Caco-2 (cell line): ENCODE measurements at regions of chr3 and their contacts with region 1.

Region 1: DNA sequence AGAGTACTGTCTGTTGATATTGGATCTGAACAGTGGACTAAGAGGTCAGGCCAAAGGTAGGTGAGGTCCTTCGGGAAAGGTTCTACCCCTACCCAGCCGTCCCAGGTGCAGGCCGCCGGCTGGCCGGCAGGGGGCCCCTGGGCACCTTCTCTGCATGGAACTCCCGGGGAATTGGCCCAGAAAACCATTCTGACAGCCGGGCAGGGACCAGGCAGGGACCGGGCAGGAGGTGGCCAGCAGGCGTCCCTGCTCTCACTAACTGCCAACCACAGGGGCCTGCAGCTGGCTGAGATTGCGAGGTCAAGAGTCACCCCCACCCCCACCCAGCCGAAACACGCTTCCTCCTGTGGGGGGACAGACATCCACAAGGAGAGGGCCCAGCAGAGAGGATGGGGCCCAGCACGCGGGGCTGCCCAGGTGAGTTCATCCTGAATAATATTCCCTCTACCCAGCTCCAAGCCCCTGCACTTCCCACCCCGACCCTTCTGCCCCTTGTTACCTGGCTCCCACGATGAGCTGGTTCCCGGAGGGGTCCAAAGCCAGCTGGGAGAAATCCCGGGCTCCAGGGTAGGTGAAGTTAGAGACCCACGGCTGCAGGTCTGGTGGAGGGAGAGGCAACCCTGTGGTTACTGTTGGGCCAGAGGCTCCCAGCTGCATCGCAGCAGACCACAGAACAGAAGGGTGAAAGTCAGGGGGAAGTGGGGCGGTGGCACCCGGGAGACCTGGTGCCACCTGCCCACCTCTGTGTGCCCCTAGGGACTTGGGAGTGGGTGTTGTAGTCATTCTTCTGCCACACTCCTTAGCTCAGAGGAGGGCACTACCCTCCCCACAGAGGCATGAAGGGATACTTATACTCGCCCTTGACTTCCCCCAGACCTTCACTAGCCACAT is 84.4 kb downstream of the SEMA5B start:
- DNase-seq: peak; percentile 68 to 85
- H3K4me3 ChIP-seq: no peak overlapping the region
- H3K4me3 Mint-ChIP-seq: no peak overlapping the region
- H3K27ac Mint-ChIP-seq: peak overlapping the region; percentile 16
- H3K4me1 ChIP-seq: no peaks in the 10 kb centered on the region; the same call in 1 of the 2 replicates
- H3K4me1 Mint-ChIP-seq: peaks cover 7% of the 10 kb centered on the region
- H3K27me3 ChIP-seq: no peaks in the 10 kb centered on the region
- H3K27me3 Mint-ChIP-seq: no peaks in the 10 kb centered on the region
- CTCF ChIP-seq: peak; percentile 77 to 92

Region 2: GRCh38 chr3:122754929-122755328 is 188.3 kb before region 1 on chr3:
- CTCF ChIA-PET with region 1: interaction called, 3 read pairs
- POLR2A ChIA-PET with region 1: no interaction called
- intact Hi-C with region 1: loop called (anchors 2 kb)
- DNase-seq: peak; percentile 71 to 76
- H3K4me3 ChIP-seq: no peak overlapping the region
- H3K4me3 Mint-ChIP-seq: peak overlapping the region; percentile 43
- H3K27ac Mint-ChIP-seq: peak overlapping the region; percentile 93
- H3K4me1 ChIP-seq: peaks cover 43% of the 10 kb centered on the region
- H3K4me1 Mint-ChIP-seq: peaks cover 35% of the 10 kb centered on the region
- H3K27me3 ChIP-seq: no peaks in the 10 kb centered on the region
- H3K27me3 Mint-ChIP-seq: no peaks in the 10 kb centered on the region
- CTCF ChIP-seq: peak; percentile 75 to 82

Region 3: GRCh38 chr3:122982216-122983185 is 39.3 kb after region 1 on chr3:
- CTCF ChIA-PET with region 1: no interaction called
- POLR2A ChIA-PET with region 1: no interaction called
- intact Hi-C with region 1: loop called (anchors 2 kb)
- DNase-seq: peak; percentile 41 to 50
- H3K4me3 ChIP-seq: no peak overlapping the region
- H3K4me3 Mint-ChIP-seq: no peak overlapping the region
- H3K27ac Mint-ChIP-seq: no peak overlapping the region
- H3K4me1 ChIP-seq: peaks cover 4% of the 10 kb centered on the region; the same call in 1 of the 2 replicates
- H3K4me1 Mint-ChIP-seq: no peaks in the 10 kb centered on the region
- H3K27me3 ChIP-seq: no peaks in the 10 kb centered on the region
- H3K27me3 Mint-ChIP-seq: no peaks in the 10 kb centered on the region
- CTCF ChIP-seq: peak; percentile 30 to 34

Region 4: DNA sequence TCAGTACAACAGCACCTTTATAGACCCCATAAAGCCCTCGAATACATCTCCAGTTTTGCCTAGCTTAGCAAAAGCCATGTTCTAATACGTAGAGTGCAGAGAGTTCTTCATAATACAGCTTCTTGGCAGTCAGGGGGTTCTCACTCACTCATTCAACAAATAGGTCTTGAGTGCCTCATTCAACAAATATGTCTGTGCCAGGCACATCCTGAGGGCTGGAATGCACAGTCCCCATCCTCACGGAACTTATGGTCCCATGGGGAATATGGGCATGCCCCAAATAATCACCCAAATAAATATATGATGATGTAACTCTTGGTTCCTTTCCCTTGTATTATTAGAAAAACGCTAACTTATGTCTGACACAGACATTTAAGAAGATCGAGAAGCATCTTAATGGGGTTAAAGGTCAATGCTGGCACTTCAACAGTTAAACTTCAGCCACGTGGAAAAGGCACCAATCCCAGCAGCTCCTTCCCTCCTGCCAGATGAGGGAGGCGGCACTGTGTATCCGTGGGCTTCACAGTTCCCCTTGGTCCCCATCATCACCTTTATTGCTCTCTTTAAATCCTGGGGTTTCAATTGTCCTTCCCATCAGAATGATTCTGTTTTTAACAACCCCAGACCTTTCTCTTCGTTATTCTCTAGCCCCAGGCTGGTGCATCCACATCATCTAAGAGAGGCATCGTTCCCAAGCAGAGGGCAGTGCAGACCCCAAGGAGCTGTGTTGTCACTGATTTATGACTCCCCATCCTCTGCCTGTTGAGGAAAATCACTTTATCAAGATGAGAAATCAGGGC is 103.3 kb after region 1 on chr3:
- CTCF ChIA-PET with region 1: no interaction called
- POLR2A ChIA-PET with region 1: no interaction called
- intact Hi-C with region 1: no loop called
- DNase-seq: no peak
- H3K4me3 ChIP-seq: no peak overlapping the region
- H3K4me3 Mint-ChIP-seq: no peak overlapping the region
- H3K27ac Mint-ChIP-seq: no peak overlapping the region
- H3K4me1 ChIP-seq: peaks cover 6% of the 10 kb centered on the region
- H3K4me1 Mint-ChIP-seq: no peaks in the 10 kb centered on the region
- H3K27me3 ChIP-seq: no peaks in the 10 kb centered on the region
- H3K27me3 Mint-ChIP-seq: no peaks in the 10 kb centered on the region
- CTCF ChIP-seq: no peak

Region 5: GRCh38 chr3:123258811-123259420 is 315.7 kb after region 1 on chr3:
- CTCF ChIA-PET with region 1: no interaction called
- POLR2A ChIA-PET with region 1: no interaction called
- intact Hi-C with region 1: loop called (anchors 2 kb)
- DNase-seq: peak in 1 of 2 experiments; percentile 31
- H3K4me3 ChIP-seq: no peak overlapping the region
- H3K4me3 Mint-ChIP-seq: no peak overlapping the region
- H3K27ac Mint-ChIP-seq: no peak overlapping the region
- H3K4me1 ChIP-seq: no peaks in the 10 kb centered on the region
- H3K4me1 Mint-ChIP-seq: no peaks in the 10 kb centered on the region
- H3K27me3 ChIP-seq: no peaks in the 10 kb centered on the region
- H3K27me3 Mint-ChIP-seq: no peaks in the 10 kb centered on the region
- CTCF ChIP-seq: peak; percentile 47 to 52